Activated CD8-positive, alpha-beta T cell treated with anti-CD3 and anti-CD28 coated beads, Interleukin-2, amount 10 ng/mL, durations not matched to agents 7 days and 5 days (primary cell): ENCODE measurements at regions of chr20 and their contacts with region 1.

Region 1: GRCh38 chr20:49323622-49324238 is 45.9 kb upstream of the ZNFX1 start:
- DNase-seq: peak; percentile 60
- ATAC-seq: peak; percentile 76
- H3K4me3 Mint-ChIP-seq: no peak overlapping the region
- H3K27ac Mint-ChIP-seq: peak overlapping the region; percentile 64
- H3K4me1 Mint-ChIP-seq: peaks cover 28% of the 10 kb centered on the region
- H3K27me3 Mint-ChIP-seq: peaks cover 49% of the 10 kb centered on the region

Region 2: GRCh38 chr20:49245921-49246740 is 77.6 kb before region 1 on chr20:
- CTCF ChIA-PET with region 1: interaction called, 19 read pairs
- POLR2A ChIA-PET with region 1: no interaction called
- DNase-seq: peak; percentile 38
- ATAC-seq: peak; percentile 68
- H3K4me3 Mint-ChIP-seq: no peak overlapping the region
- H3K27ac Mint-ChIP-seq: peak overlapping the region; percentile 9
- H3K4me1 Mint-ChIP-seq: no peaks in the 10 kb centered on the region
- H3K27me3 Mint-ChIP-seq: no peaks in the 10 kb centered on the region

Region 3: DNA sequence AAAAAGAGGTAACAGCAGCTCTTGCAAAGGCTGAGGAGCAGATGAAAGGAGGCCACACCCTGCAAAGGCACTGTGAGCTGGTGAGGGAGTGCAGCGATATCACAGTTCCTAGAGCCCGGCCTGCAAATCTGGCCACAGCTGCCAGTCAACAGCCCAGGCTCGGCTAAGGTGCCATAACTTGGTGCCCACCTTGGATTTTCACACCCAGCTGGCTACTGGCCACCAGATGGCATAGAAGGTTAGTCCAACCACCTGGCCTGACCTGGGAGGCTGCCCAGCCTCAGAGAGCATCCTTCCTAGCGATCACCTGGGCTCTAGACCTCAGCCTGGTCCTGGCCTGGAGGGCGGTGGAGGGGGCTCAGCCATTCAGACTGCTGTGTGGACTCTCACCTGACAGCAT is 111.9 kb after region 1 on chr20:
- CTCF ChIA-PET with region 1: no interaction called
- POLR2A ChIA-PET with region 1: no interaction called
- DNase-seq: no peak
- ATAC-seq: no peak
- H3K4me3 Mint-ChIP-seq: no peak overlapping the region
- H3K27ac Mint-ChIP-seq: no peak overlapping the region
- H3K4me1 Mint-ChIP-seq: no peaks in the 10 kb centered on the region
- H3K27me3 Mint-ChIP-seq: peaks cover 9% of the 10 kb centered on the region

Region 4: DNA sequence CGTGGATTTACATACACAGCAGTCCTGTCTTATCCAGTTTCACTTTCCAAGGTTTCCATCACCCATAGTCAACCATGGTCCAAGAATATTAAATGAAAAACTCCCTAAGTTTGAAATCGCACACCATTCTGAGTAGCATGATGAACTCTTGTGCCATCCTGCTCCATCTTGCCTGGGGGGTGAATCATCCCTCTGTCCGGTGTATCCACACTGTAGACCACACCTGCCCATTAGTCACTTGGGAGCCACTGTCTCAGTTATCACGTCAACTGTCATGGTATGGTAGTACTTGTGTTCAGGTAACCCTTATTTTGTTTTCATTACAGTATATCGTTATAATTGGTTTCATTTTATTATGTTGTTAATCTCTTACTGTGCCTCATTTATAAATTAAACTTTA is 205.7 kb after region 1 on chr20:
- CTCF ChIA-PET with region 1: no interaction called
- POLR2A ChIA-PET with region 1: no interaction called
- DNase-seq: no peak
- ATAC-seq: no peak
- H3K4me3 Mint-ChIP-seq: no peak overlapping the region
- H3K27ac Mint-ChIP-seq: no peak overlapping the region
- H3K4me1 Mint-ChIP-seq: peaks cover 6% of the 10 kb centered on the region
- H3K27me3 Mint-ChIP-seq: peaks cover 20% of the 10 kb centered on the region